ENCODE measurements at regions of chr10 and their contacts with region 1.

Region 1: GRCh38 chr10:36779234-36779846 is 346.1 kb upstream of the ANKRD30A start:
- DNase-seq: peak; percentile 61

Region 2: GRCh38 chr10:35635576-35635975 is 1143.8 kb before region 1 on chr10:
- in situ Hi-C with region 1: loop called (anchors 10 kb)
- DNase-seq: peak; percentile 66